ENCODE measurements at regions of chrX and their contacts with region 1.

Region 1: DNA sequence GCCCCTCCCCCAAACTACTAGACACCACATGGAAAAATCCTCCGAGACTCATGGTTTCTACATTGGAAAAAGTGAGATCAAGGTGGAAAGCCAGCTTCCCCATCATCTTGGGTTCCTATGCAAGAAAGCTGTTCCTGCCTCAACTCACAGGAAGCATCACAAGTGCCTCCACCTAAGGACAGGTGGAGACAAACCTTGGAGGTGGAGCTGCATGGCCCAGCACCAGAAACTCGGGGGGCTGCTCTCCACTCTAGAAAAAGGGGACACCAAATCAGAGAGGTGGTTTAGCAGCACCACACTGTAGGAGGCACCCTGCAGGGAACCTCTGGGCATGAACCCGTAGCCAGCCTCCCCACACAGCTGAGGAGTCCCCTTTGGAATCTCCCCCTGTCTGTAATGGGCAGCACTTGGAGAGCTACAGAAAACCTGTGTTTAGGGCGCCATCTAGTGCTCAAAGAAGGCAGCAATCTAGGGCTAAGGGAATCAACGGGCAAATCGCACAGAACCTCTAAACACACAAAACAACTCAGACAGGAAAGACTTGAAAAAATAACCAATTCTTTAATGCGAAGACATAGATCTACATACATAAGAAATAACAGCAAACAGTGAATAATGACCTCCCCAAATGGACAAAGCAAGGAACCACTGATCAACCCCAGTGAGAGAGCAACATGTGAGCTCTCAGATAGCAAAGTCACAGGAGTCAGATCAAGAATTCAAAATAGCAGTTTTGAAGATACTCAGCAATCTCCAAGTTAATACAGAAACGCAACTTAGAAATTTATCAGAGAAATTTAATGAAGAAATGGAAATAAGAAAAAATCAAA is 37.0 kb upstream of the ZBTB33 start:
- DNase-seq: peak; percentile 77
- H3K4me3 Mint-ChIP-seq: no peak overlapping the region
- H3K27ac Mint-ChIP-seq: no peak overlapping the region
- H3K4me1 Mint-ChIP-seq: no peaks in the 10 kb centered on the region
- H3K27me3 Mint-ChIP-seq: peaks cover 58% of the 10 kb centered on the region
- CTCF ChIP-seq: peak; percentile 46

Region 2: GRCh38 chrX:120029354-120029753 is 184.3 kb before region 1 on chrX:
- CTCF ChIA-PET with region 1: interaction called, 10 read pairs
- POLR2A ChIA-PET with region 1: no interaction called
- intact Hi-C with region 1: no loop called
- DNase-seq: peak; percentile 5
- H3K4me3 Mint-ChIP-seq: no peak overlapping the region
- H3K27ac Mint-ChIP-seq: no peak overlapping the region
- H3K4me1 Mint-ChIP-seq: no peaks in the 10 kb centered on the region
- H3K27me3 Mint-ChIP-seq: peaks cover 50% of the 10 kb centered on the region
- CTCF ChIP-seq: no peak

Region 3: DNA sequence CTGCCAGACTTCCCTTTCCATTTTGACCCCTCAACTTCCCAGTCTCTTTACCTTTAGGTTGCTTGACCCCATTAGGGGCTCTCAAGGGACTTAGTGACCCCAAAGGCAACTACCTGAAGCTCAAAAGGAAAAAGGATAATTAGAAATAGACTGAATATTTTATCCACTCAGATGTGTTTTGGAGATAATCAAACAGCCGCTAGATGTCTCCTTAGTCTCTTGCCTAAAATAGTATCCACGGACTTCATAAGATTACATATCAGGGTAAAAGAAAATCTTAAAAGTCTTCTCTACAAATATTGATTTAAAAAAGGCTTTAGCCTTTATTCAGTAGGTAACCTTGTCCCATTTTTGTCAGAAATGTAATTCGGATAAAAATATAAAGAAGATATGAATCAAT is 76.2 kb before region 1 on chrX:
- CTCF ChIA-PET with region 1: interaction called, 11 read pairs
- POLR2A ChIA-PET with region 1: no interaction called
- intact Hi-C with region 1: no loop called
- DNase-seq: peak; percentile 20
- H3K4me3 Mint-ChIP-seq: no peak overlapping the region
- H3K27ac Mint-ChIP-seq: no peak overlapping the region
- H3K4me1 Mint-ChIP-seq: no peaks in the 10 kb centered on the region
- H3K27me3 Mint-ChIP-seq: no peaks in the 10 kb centered on the region
- CTCF ChIP-seq: peak; percentile 10

Region 4: GRCh38 chrX:120200851-120201250 is 12.8 kb before region 1 on chrX:
- CTCF ChIA-PET with region 1: interaction called, 18 read pairs
- POLR2A ChIA-PET with region 1: no interaction called
- intact Hi-C with region 1: no loop called
- DNase-seq: no peak
- H3K4me3 Mint-ChIP-seq: no peak overlapping the region
- H3K27ac Mint-ChIP-seq: no peak overlapping the region
- H3K4me1 Mint-ChIP-seq: no peaks in the 10 kb centered on the region
- H3K27me3 Mint-ChIP-seq: peaks cover 63% of the 10 kb centered on the region
- CTCF ChIP-seq: no peak

Region 5: GRCh38 chrX:120228187-120228908 is 14.7 kb after region 1 on chrX:
- CTCF ChIA-PET with region 1: interaction called, 58 read pairs
- POLR2A ChIA-PET with region 1: no interaction called
- intact Hi-C with region 1: no loop called
- DNase-seq: no peak
- H3K4me3 Mint-ChIP-seq: no peak overlapping the region
- H3K27ac Mint-ChIP-seq: no peak overlapping the region
- H3K4me1 Mint-ChIP-seq: no peaks in the 10 kb centered on the region
- H3K27me3 Mint-ChIP-seq: peaks cover 23% of the 10 kb centered on the region
- CTCF ChIP-seq: no peak

Region 6: GRCh38 chrX:120236687-120237479 is 23.2 kb after region 1 on chrX:
- CTCF ChIA-PET with region 1: interaction called, 58 read pairs
- POLR2A ChIA-PET with region 1: no interaction called
- intact Hi-C with region 1: no loop called
- DNase-seq: no peak
- H3K4me3 Mint-ChIP-seq: no peak overlapping the region
- H3K27ac Mint-ChIP-seq: no peak overlapping the region
- H3K4me1 Mint-ChIP-seq: no peaks in the 10 kb centered on the region
- H3K27me3 Mint-ChIP-seq: peaks cover 23% of the 10 kb centered on the region
- CTCF ChIP-seq: no peak

Region 7: DNA sequence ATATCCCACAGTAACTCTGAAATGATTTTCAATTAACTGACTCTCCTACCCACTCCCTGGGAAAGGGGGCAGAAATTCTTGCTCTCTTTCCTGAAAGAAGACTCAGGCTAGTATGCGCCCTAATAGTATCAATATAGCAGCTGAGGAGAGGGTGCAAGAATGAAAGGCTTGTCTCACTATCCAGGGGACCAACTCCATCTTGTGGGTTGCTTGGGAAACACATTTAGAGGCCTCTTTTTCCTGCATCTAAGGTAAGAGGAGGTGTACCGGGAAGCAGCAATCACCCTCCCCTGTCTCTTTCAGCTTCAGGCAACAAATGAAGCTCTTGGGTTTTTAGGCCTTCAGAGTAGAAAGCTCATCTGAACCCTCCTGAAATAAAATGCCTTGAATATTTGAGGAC is 86.3 kb after region 1 on chrX:
- CTCF ChIA-PET with region 1: interaction called, 22 read pairs
- POLR2A ChIA-PET with region 1: no interaction called
- intact Hi-C with region 1: no loop called
- DNase-seq: peak; percentile 48
- H3K4me3 Mint-ChIP-seq: no peak overlapping the region
- H3K27ac Mint-ChIP-seq: no peak overlapping the region
- H3K4me1 Mint-ChIP-seq: no peaks in the 10 kb centered on the region
- H3K27me3 Mint-ChIP-seq: peaks cover 31% of the 10 kb centered on the region
- CTCF ChIP-seq: no peak

Measured in MCF 10A (cell line).